ENCODE measurements at regions of chr7 and their contacts with region 1.

Region 1: DNA sequence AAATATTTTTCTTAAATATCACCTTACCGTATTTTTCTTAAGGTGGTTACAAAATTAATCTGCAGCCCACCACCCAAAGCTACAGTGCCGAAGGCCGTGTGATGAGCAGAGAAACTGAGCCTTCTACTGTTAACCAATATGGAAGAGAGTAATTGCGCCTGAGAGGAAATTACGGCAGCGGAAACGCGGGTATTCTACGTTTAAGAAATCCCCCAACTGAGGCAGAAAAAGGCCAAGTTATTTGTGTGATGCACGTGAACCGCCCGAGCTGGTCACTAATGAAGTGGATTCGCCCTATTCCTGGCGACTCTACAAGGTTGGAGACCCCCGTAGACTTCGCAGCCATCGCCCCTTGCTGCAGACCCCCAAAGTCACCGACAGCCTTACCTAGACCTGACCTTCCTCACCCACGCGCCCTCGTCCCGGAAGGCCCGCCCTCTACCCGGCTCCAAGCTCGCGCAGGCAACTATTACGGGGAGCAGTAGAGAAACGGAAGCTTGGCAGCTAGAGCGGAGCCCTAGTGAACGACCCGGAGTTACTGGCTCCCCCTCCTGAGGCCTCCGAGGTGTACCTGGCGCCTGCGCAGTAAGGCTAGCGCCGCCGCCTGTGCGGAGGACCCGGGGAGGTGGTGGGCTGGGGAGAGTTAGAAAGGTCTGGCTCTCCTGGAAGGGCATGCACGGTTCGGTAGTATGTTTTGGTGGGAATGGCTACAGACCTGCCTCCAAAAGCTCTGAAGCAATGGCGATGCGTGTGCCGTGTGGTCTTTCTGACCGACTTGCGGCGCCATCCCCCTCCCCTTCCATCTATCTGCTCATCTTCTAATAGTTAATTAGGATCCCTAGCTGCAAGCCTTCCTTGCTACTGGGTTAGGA is at the start of gene MRPS33:
- DNase-seq: peak; percentile 89
- ATAC-seq: peak; percentile 97
- H3K4me3 ChIP-seq: peak within 1 kb of the TSS; percentile 86
- H3K27ac ChIP-seq: peak within 1 kb of the TSS; percentile 95
- H3K4me1 ChIP-seq: peaks cover 10% of the 10 kb centered on the region
- H3K27me3 ChIP-seq: no peaks in the 10 kb centered on the region
- CTCF ChIP-seq: peak; percentile 72 to 93 (median 80)
- EP300 ChIP-seq: no peak; a peak in 1 of 4 replicates
- POLR2A ChIP-seq: peak; percentile 99
- RAD21 ChIP-seq: no peak
- polyA plus RNA-seq, gene MRPS33: 336 to 372 TPM

Region 2: GRCh38 chr7:140517546-140518369 is 497.0 kb before region 1 on chr7:
- CTCF ChIA-PET with region 1: interaction called, 4 read pairs
- POLR2A ChIA-PET with region 1: no interaction called
- RAD21 ChIA-PET with region 1: interaction called, 5 read pairs
- SMC1A ChIA-PET with region 1: no interaction called
- in situ Hi-C with region 1: loop called (anchors 10 kb)
- intact Hi-C with region 1: loop called (anchors 2 kb)
- DNase-seq: peak; percentile 23
- ATAC-seq: peak; percentile 94
- H3K4me3 ChIP-seq: no peak overlapping the region
- H3K27ac ChIP-seq: no peak overlapping the region
- H3K4me1 ChIP-seq: no peaks in the 10 kb centered on the region
- H3K27me3 ChIP-seq: no peaks in the 10 kb centered on the region; a peak in 2 of 4 replicates
- CTCF ChIP-seq: peak; percentile 71 to 83 (median 73)
- EP300 ChIP-seq: no peak
- POLR2A ChIP-seq: no peak
- RAD21 ChIP-seq: peak; percentile 57

Region 3: DNA sequence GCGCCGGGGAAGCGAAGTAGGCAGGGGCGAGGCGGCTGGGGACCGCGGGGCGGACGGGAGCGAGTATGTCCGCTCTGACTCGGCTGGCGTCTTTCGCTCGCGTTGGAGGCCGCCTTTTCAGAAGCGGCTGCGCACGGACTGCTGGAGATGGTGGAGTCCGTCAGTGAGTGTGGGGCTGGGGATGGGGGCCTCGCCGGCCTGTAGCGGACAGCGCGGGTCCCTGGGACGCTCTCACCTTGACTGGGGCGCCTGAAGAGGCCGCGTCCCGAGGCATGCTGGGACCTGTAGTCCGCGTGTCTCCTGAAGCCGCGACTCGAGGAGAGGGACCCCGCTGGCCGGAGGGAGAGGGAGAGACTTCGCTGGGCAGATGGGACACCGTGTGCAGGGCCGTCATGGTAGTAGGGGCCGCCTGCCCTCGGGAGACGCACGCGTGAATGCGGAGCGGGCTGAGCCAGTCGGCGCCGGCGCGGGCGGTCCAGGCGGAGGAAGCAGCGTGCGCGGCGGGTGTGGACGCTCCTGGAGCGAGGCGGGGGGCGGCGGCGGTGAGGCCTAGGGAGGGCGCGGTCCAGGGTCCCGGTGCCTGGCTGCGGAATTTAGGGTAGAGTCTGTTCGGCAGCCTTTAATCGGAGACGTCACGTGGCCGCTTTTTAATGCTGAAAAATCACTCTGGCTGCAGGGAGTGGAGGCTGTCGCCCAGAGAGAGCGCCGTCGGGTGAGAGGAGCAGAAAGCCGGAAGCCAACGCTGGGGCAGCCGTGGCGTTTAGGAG is 317.9 kb before region 1 on chr7 and contains the start of gene NDUFB2:
- CTCF ChIA-PET with region 1: interaction called, 5 read pairs
- POLR2A ChIA-PET with region 1: interaction called, 3 read pairs
- RAD21 ChIA-PET with region 1: no interaction called
- SMC1A ChIA-PET with region 1: interaction called, 3 read pairs
- in situ Hi-C with region 1: no loop called
- intact Hi-C with region 1: loop called (anchors 1 kb)
- DNase-seq: peak; percentile 57
- ATAC-seq: peak; percentile 93
- H3K4me3 ChIP-seq: peak within 1 kb of the TSS; percentile 77
- H3K27ac ChIP-seq: peak within 1 kb of the TSS; percentile 90
- H3K4me1 ChIP-seq: peaks cover 11% of the 10 kb centered on the region
- H3K27me3 ChIP-seq: no peaks in the 10 kb centered on the region
- CTCF ChIP-seq: no peak
- EP300 ChIP-seq: no peak
- POLR2A ChIP-seq: peak; percentile 95
- RAD21 ChIP-seq: no peak
- polyA plus RNA-seq, gene NDUFB2: 1,189 to 1,236 TPM

Region 4: GRCh38 chr7:140902303-140902953 is 112.3 kb before region 1 on chr7:
- CTCF ChIA-PET with region 1: interaction called, 11 read pairs
- POLR2A ChIA-PET with region 1: no interaction called
- RAD21 ChIA-PET with region 1: interaction called, 4 read pairs
- SMC1A ChIA-PET with region 1: interaction called, 3 read pairs
- in situ Hi-C with region 1: no loop called
- intact Hi-C with region 1: no loop called
- DNase-seq: peak; percentile 48
- ATAC-seq: peak; percentile 79
- H3K4me3 ChIP-seq: 0 out of 2 replicates have a peak overlapping the region, but pooled peaks have one; percentile 24
- H3K27ac ChIP-seq: peak overlapping the region; percentile 52; the same call in 1 of the 2 replicates
- H3K4me1 ChIP-seq: peaks cover 8% of the 10 kb centered on the region; the same call in 1 of the 2 replicates
- H3K27me3 ChIP-seq: no peaks in the 10 kb centered on the region
- CTCF ChIP-seq: no peak
- EP300 ChIP-seq: peak; percentile 44 to 51; a peak in 1 of 4 replicates
- POLR2A ChIP-seq: no peak
- RAD21 ChIP-seq: no peak

Region 5: GRCh38 chr7:141220263-141220880 is 205.6 kb after region 1 on chr7:
- CTCF ChIA-PET with region 1: interaction called, 34 read pairs
- POLR2A ChIA-PET with region 1: interaction called, 3 read pairs
- RAD21 ChIA-PET with region 1: interaction called, 5 read pairs
- SMC1A ChIA-PET with region 1: interaction called, 5 read pairs
- in situ Hi-C with region 1: no loop called
- intact Hi-C with region 1: loop called (anchors 5 kb)
- DNase-seq: no peak
- ATAC-seq: peak; percentile 87
- H3K4me3 ChIP-seq: no peak overlapping the region
- H3K27ac ChIP-seq: no peak overlapping the region
- H3K4me1 ChIP-seq: no peaks in the 10 kb centered on the region
- H3K27me3 ChIP-seq: no peaks in the 10 kb centered on the region; a peak in 1 of 4 replicates
- CTCF ChIP-seq: peak; percentile 21 to 53 (median 42); a peak in 4 of 6 replicates
- EP300 ChIP-seq: no peak
- POLR2A ChIP-seq: no peak
- RAD21 ChIP-seq: peak; percentile 72

Region 6: DNA sequence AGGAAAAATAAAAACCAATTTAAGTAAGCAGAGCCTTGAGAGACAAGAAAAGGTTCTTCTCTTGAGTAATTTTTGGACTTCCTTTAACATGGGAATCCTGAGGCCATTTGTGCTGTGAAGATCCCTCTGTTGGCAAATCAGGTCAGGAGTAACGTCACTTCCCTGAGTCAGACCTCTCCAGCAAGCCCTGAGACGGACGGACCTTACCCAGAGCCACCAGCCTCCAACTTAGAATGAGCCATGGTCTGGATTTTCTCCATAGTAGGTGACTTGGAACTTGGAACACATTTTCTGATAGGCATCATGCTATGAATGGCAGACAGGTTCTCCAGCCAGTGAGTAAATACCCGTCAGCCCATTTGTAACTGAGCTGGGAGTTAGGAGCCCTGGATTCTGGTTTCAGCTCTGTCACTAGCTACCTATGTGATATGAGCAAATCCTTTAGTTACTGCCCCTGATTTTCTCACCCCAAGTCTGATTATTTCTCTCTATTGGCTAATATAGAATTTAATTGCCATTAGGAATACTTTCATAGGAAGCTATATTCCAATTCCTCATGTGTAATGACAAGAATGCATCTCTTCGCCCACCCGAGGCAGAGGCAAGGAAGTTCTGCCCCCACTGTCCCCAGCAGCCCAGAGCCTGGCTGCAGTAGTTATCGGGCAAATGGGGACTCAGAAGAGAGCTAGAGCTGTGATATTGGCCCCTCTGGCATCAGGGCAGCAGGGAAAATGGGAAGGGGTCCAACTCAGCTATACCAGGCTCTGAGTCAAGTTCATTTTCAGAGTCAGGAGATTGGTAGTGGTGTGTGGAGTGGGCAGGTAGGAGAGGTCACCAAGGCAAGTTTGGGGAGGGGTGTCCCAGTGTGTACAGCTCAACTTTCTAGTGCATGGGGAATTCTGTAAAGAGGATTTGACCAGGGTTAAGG is 382.7 kb after region 1 on chr7:
- CTCF ChIA-PET with region 1: no interaction called
- POLR2A ChIA-PET with region 1: no interaction called
- RAD21 ChIA-PET with region 1: no interaction called
- SMC1A ChIA-PET with region 1: no interaction called
- in situ Hi-C with region 1: no loop called
- intact Hi-C with region 1: no loop called
- DNase-seq: no peak
- ATAC-seq: no peak
- H3K4me3 ChIP-seq: no peak overlapping the region
- H3K27ac ChIP-seq: no peak overlapping the region
- H3K4me1 ChIP-seq: no peaks in the 10 kb centered on the region
- H3K27me3 ChIP-seq: no peaks in the 10 kb centered on the region; a peak in 1 of 4 replicates
- CTCF ChIP-seq: no peak
- EP300 ChIP-seq: no peak
- POLR2A ChIP-seq: no peak
- RAD21 ChIP-seq: no peak

Region 7: DNA sequence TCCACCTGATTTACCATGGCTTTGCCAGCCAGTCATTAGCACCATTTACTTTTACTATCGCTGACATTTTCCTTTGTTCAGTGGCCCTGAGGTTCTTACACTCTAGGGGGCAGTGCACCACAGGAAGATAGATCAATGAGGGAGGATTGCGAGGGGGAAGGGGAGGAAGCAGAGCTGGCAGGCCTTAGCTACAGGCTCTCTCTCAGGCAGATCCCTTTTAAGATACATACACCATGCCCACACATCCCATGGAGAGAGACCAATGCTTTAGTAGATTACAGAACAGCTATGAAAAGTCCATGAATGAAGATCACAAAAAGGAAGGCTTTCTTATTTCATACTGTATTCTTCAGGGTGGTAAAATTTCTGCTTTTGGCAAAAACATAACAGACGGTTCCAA is 639.8 kb after region 1 on chr7:
- CTCF ChIA-PET with region 1: interaction called, 17 read pairs
- POLR2A ChIA-PET with region 1: interaction called, 3 read pairs
- RAD21 ChIA-PET with region 1: interaction called, 12 read pairs
- SMC1A ChIA-PET with region 1: interaction called, 3 read pairs
- in situ Hi-C with region 1: loop called (anchors 10 kb)
- intact Hi-C with region 1: loop called (anchors 1 kb)
- DNase-seq: peak; percentile 23
- ATAC-seq: peak; percentile 87
- H3K4me3 ChIP-seq: no peak overlapping the region
- H3K27ac ChIP-seq: no peak overlapping the region
- H3K4me1 ChIP-seq: peaks cover 3% of the 10 kb centered on the region
- H3K27me3 ChIP-seq: no peaks in the 10 kb centered on the region
- CTCF ChIP-seq: peak; percentile 75 to 83 (median 79)
- EP300 ChIP-seq: no peak
- POLR2A ChIP-seq: no peak
- RAD21 ChIP-seq: peak; percentile 94

Region 8: GRCh38 chr7:141915565-141915964 is 900.8 kb after region 1 on chr7:
- CTCF ChIA-PET with region 1: no interaction called
- POLR2A ChIA-PET with region 1: no interaction called
- RAD21 ChIA-PET with region 1: no interaction called
- SMC1A ChIA-PET with region 1: no interaction called
- in situ Hi-C with region 1: no loop called
- intact Hi-C with region 1: no loop called
- DNase-seq: no peak
- ATAC-seq: peak; percentile 52
- H3K4me3 ChIP-seq: no peak overlapping the region
- H3K27ac ChIP-seq: no peak overlapping the region
- H3K4me1 ChIP-seq: no peaks in the 10 kb centered on the region
- H3K27me3 ChIP-seq: no peaks in the 10 kb centered on the region
- CTCF ChIP-seq: no peak
- EP300 ChIP-seq: no peak
- POLR2A ChIP-seq: no peak
- RAD21 ChIP-seq: no peak

Measured in GM12878 (cell line).